ENCODE measurements at regions of chr14 and their contacts with region 1.

Region 1: GRCh38 chr14:49173765-49174373 is 412.3 kb downstream of the RPS29 start:
- DNase-seq: no peak
- ATAC-seq: no peak

Region 2: DNA sequence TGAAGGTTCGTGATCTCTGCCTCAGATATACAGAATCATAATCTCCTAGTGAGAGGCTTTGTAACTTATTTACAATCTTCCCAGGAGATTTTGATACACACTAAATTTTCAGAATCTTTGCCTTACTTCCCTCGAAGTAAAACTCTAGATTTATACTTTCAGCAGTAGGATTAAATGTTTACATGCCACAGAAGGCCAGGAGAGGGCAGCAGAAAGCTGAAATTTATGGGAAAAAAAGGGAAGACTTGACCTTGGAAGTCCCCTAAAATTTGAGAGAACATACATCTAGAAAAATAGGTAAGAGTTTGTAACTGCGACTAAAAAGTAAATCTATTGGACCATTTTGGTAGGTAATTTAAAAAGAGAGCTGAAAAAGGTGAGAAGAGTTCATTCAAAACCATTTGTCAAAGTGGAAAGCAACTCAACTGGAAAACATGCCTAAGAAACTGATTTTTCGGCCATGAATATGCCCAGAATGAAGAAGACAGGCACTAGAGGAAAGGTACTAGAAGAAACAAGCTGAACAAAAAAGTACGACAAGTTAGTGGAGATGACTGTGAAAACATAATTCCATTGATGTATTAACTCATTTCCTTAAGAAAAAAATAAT is 1256.4 kb before region 1 on chr14:
- intact Hi-C with region 1: loop called (anchors 10 kb)
- DNase-seq: no peak
- ATAC-seq: no peak

Region 3: GRCh38 chr14:49134940-49135339 is 38.9 kb before region 1 on chr14:
- intact Hi-C with region 1: no loop called
- DNase-seq: no peak
- ATAC-seq: no peak

Measured in Right ventricle myocardium inferior (tissue), 1 donor.